ENCODE measurements at regions of chr1 and their contacts with region 1.

Region 1: DNA sequence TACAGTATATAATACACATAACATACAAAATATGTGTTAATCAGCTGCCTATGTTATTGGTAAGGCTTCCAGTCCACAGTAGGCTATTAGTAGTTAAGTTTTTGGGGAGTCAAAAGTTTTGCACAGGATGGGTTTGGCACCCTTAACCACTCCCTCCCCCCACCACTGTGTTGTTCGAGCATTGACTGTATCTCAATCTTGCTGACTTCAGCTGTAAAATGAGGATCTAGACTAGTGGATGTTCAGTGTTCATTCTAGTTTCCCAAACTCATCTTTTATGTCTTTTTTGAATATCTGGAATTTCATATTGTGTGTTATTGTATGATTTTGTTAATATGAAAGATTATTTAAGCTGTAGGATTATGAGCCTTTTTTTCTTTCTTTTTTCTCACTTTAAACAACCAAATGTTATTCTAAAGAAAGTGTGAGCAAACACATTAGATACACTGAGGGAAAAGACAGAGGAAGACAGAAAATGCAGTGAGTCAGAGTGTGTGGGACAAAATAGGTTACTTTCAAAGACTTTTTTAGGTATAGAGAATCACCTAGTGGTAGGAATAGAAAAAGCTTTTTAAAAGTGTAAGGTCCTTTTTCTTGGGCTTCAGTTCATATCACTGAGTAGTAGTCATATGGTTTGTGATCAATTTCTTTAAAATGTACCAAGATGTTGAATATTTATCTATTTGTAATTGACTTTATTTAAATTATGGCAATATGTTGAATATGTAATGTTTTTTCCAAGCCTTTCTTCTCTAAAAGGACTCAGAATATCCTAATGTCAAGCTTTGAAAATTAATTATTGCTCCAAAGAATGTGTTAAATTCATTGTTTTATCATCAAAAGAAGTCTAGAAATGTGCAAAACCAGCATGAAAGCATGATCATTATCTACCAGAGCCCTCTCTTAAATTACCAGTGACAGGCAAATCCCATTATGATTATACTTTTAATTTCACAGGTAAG is 17.9 kb upstream of the CENPF start:
- H3K4me3 ChIP-seq: no peak overlapping the region
- H3K27ac ChIP-seq: no peak overlapping the region
- H3K4me1 ChIP-seq: no peaks in the 10 kb centered on the region
- CTCF ChIP-seq: peak; percentile 56; the same call in 1 of the 2 replicates

Region 2: DNA sequence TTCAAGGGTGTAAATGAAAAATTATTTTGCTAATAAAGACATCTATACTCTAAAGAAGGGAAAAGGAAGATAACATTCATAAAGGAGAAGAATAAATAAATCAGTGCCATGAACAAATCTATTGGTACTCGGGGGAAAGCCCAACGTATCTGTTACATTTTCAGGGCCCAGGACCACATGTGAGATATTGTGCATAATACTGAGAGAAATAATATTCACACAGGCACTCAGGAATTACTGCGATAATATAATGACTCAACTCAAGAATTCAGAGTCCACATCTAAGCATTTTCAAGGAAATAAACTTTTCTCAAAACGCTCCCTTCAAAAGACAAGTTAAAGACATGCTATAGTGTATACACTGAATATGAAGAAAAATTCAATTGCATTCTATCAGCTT is 195.4 kb before region 1 on chr1:
- CTCF ChIA-PET with region 1: interaction called, 28 read pairs
- POLR2A ChIA-PET with region 1: no interaction called
- H3K4me3 ChIP-seq: no peak overlapping the region
- H3K27ac ChIP-seq: no peak overlapping the region
- H3K4me1 ChIP-seq: peaks cover 4% of the 10 kb centered on the region; the same call in 1 of the 2 replicates
- CTCF ChIP-seq: no peak

Region 3: DNA sequence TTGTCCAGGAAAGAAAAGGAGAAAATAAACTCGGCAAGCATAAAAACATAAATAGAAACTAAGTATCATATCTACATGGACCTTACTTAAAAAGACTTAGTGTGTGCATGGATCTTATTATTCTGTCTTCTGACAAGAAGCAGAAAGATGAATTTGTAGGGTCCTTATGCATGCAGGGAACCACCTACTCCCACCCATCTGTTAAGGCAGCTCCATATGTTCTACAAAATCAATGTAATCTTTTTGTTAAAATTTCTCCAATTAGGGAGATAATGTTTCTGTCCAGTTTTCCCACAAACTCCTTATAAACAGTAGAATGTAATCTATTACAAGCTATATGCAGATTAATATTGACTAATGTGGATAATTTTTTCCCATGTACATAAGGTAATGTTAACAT is 19.8 kb before region 1 on chr1:
- CTCF ChIA-PET with region 1: interaction called, 10 read pairs
- POLR2A ChIA-PET with region 1: no interaction called
- H3K4me3 ChIP-seq: no peak overlapping the region
- H3K27ac ChIP-seq: no peak overlapping the region
- H3K4me1 ChIP-seq: peaks cover 4% of the 10 kb centered on the region; the same call in 1 of the 2 replicates
- CTCF ChIP-seq: no peak

Region 4: DNA sequence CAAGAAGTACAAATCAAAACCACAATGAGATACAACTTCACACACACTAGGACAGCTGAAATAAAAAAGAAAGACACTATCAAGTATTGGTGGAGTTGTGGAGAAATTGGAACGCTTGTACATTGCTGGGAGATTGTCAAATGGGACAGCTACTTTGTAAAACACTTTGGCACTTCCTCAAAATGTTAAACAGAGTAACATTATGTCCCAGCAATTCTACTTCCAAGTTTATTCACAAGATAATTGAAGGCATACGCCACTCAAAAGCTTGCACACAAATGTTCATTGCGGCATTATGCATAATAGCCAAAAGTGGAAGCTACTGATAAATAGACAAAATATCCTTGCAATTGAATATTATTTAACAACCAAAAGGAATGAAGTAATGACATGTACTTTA is 297.5 kb after region 1 on chr1:
- CTCF ChIA-PET with region 1: no interaction called
- POLR2A ChIA-PET with region 1: no interaction called
- H3K4me3 ChIP-seq: no peak overlapping the region
- H3K27ac ChIP-seq: no peak overlapping the region
- H3K4me1 ChIP-seq: no peaks in the 10 kb centered on the region
- CTCF ChIP-seq: no peak

Measured in HEK293 (cell line).